Stomach (tissue), 19 donors: ENCODE measurements at regions of chr12 and their contacts with region 1.

Region 1: DNA sequence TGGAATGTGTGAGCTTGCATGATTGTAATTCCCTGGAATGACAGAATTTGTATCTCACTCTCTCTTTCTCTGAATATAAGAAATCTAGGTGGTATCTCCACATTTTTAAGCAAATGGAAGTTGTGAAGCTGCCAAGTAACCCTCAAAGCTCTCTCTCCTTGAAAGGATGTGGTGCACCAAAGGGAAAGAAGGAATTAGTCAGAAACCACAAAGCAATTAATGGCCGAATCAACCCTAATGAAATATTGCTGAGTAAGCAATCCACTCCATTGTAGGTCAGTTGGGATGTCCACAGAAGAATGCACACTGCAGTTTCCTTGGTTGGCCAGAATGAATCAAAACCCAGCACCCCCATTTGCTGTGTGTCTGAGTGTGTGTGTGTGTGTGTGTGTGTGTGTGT is 153.5 kb downstream of the KCNA5 start:
- DNase-seq: no peak
- H3K4me3 ChIP-seq: no peak overlapping the region
- H3K27ac ChIP-seq: no peak overlapping the region
- H3K4me1 ChIP-seq: peaks cover 0 to 5% (median 0%) of the 10 kb centered on the region in 4 donors
- H3K27me3 ChIP-seq: peaks cover 0 to 33% (median 8%) of the 10 kb centered on the region in 3 donors
- CTCF ChIP-seq: no peak
- EP300 ChIP-seq: no peak
- POLR2A ChIP-seq: no peak

Region 2: DNA sequence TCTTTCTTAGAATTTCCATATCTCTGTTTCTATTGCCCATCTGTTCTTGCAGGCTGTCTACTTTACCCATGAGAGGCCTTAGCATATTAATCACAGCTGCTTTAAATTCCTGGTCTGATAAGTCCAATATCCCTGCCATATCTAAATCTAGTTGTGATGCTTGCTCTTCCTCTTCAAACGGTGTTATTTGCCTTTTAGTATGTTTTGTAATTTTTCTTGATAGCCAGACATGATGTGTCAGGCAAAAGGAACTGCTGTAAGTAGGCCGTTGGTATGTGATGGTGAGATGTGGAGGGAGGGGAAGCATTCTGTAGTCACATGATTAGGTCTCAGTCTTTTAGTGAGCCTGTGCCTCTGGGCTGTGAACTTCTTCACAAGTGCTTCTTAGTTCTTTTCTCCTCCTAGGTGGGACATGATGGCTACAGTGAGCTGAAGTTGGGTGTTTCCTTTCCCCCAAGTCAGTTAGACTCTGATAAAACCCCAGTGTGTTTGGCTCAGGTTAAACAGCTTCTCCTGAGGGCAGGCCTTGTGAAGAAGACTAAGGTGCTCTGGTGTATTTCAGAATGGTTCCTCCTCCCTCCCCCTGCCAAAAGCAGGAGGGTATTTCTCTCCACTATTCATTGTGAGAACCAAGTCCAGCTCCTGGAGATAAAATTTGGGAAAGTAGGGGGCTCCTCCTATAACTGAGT is 1128.0 kb before region 1 on chr12:
- intact Hi-C with region 1: no loop called
- DNase-seq: no peak
- H3K4me3 ChIP-seq: no peak overlapping the region
- H3K27ac ChIP-seq: no peak overlapping the region
- H3K4me1 ChIP-seq: no peaks in the 10 kb centered on the region
- H3K27me3 ChIP-seq: no peaks in the 10 kb centered on the region
- CTCF ChIP-seq: no peak
- EP300 ChIP-seq: no peak
- POLR2A ChIP-seq: no peak

Region 3: DNA sequence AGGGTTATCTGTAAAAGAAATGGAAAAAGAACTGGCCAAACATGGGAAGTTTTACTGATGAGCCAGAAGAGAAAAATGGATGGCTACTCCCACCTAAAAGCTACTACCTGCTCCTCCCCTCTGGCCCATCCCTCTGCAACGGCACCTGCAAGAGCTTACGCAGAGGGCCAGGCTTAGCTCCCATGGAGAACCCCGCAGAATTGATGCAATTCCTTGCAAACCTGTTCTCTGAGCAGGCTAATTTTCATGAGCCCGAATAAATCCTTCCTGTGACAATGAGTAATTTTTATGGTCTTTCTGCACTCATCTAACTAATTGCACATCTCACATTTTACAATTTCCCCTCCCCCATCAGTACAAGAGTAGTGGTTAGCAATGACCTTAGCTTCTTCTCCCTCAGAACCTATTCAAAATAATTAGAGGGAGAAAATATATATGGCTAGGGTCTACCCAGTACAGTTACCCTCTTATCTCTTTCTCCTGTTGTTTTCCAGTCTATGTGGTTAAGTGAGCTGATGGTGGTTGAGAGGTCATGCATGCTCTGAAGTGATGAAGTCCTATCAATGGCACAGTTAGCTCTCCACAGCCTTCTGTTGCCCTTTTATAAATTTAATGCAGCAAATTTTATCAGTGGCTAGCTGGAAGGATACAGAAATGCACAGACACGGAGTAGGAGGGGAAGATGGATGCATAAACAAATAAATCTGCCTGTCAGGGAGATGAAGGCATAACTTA is 167.1 kb after region 1 on chr12:
- intact Hi-C with region 1: no loop called
- DNase-seq: no peak
- H3K4me3 ChIP-seq: no peak overlapping the region
- H3K27ac ChIP-seq: no peak overlapping the region
- H3K4me1 ChIP-seq: no peaks in the 10 kb centered on the region
- H3K27me3 ChIP-seq: no peaks in the 10 kb centered on the region
- CTCF ChIP-seq: no peak
- EP300 ChIP-seq: no peak
- POLR2A ChIP-seq: no peak

Region 4: DNA sequence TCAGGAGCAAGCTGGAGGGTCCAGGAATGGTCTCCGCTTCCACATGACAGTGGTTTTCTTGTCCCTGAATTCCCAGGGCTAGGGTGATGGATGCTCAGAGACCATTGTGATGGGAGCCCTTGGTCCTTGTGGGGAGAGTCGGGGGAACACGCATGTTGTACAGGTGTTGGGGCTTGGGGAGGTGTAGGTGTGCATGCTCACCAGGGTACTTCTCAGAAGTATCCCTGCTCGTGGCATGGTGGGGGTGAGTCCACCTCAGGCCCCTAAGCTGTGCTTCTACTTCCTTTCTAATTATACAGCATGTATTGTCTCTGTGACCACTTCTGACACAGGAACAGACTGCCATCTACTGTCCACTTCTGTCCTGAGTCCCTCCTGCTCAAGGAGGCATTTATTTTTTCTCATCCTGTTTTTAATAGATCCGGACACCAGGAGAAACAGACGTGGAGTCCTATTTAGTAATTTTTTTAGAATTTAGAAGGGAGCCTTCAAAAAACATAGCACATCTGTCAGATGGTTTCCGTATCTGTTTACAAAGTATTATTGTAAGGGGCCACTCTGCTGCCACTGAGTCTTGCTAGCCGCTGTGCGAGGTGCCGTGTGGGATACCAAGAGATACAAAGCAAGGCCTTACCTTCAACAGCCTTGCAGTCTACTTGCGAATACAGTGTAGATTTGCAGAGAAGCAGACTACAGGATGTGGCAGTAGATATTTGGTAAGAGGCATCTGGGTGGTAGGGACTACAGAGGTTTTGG is 245.3 kb after region 1 on chr12:
- intact Hi-C with region 1: loop called (anchors 10 kb)
- DNase-seq: peak in 1 of 2 donors; percentile 82
- H3K4me3 ChIP-seq: no peak overlapping the region
- H3K27ac ChIP-seq: no peak overlapping the region
- H3K4me1 ChIP-seq: peaks cover 0 to 18% (median 3%) of the 10 kb centered on the region in 4 donors
- H3K27me3 ChIP-seq: peaks cover 0 to 34% (median 0%) of the 10 kb centered on the region in 3 donors
- CTCF ChIP-seq: peak in 5 of 7 experiments; percentile 31 to 47 (median 44)
- EP300 ChIP-seq: no peak
- POLR2A ChIP-seq: no peak